Dendritic cell treated with granulocyte-macrophage colony-stimulating factor and Interleukin-4, amounts not matched to agents 40 ng/mL and 50 ng/mL, for 4 days (primary cell): ENCODE measurements at regions of chr10 and their contacts with region 1.

Region 1: DNA sequence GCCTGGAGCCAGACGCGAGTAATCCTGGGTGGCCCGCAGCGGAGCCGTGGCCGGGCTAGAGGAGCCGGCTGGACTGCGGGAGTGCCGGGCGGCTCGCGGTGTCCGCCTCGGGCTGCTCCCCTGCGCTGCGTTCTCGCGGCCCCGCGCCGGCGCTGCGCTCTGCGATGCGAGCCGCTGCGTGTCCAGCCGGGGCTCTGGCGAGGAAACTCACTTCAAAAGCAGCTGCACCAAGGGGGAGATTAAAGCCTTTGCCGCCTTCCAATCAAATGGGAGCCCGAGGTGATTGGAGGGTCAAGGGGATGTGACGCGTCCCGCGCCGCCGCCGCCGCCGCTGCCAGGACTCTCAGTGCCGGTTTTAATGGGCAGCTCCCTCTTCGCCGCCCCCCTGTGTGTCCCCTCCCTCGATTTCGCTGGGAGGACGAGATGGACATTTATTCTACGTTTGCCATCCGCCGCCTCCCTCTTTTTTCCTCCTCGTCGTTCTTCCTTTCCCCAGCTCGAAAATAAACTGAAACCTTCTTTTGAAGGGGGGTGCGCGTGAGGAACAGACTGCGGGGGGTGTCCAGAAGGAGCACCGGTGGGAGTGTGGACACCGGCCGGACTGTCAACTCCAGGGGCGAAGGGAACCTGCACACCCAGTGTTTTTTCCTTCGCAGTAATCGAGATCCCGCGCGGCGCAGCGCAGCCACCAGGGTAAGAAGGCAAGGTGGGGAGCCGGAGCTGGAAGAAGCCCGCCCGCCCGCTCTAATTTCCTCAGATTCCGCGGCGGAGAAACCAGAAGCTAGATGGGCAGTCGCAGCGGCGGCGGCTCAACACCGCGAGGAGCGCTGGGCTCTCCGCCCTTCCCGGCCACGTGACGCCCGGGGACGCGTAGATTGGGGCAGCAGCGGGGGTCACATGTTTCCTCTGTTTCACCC is at the start of gene ZNF503:
- H3K4me3 Mint-ChIP-seq: peak within 1 kb of the TSS; percentile 83
- H3K27ac Mint-ChIP-seq: peak within 1 kb of the TSS; percentile 91
- H3K4me1 Mint-ChIP-seq: peaks cover 52% of the 10 kb centered on the region
- H3K27me3 Mint-ChIP-seq: peaks cover 63% of the 10 kb centered on the region

Region 2: DNA sequence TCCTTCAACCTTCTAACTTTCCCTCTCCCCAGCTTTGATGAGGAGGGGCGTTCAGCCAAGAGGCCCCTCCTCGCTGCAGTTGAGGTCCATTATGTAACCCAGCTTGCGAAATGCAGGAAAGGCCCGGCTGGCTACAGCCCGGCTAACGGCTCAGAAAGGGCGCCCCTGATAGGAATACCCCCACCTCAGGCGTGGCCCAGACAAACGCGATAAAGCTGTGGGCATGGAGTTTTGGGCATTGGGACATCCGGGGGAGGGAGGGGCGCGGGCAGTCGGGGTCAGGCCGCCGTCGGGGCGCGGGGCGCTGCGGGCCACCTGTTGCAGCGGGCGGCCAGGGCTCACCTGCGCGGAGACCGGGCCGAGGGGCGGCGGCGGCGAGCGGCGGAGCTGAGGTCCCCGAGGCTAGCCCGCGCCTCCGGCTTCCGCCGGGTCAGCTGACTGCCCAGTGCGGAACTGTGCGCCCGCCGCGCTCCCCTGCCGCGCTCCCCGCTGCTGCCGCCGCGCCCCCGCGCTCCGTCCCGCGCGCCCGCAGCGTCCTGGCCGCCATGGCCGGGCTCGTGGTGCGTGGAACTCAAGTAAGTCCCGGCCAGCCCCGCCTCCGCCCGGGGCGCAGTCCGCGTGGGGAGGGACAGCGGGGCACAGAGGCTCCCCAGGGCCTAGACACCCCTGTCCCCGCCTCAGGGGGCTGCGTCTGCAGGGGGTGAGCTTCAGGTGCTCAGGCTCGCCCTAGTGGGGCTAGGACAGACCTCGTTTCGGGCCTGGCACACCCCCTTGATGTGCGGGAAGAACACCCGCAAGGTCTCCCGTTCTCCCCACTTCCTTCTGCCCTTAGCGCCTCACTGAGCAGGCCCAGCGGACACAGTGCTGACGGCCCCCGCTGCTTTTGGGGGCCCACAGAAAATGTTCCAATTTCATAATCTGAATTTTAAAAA is 29.6 kb after region 1 on chr10 and contains the start of gene LRMDA:
- intact Hi-C with region 1: loop called (anchors 2 kb)
- H3K4me3 Mint-ChIP-seq: peak within 1 kb of the TSS; percentile 88
- H3K27ac Mint-ChIP-seq: peak within 1 kb of the TSS; percentile 89
- H3K4me1 Mint-ChIP-seq: peaks cover 75% of the 10 kb centered on the region
- H3K27me3 Mint-ChIP-seq: no peaks in the 10 kb centered on the region

Region 3: GRCh38 chr10:75651417-75651816 is 249.6 kb after region 1 on chr10:
- intact Hi-C with region 1: loop called (anchors 2 kb)
- H3K4me3 Mint-ChIP-seq: no peak overlapping the region
- H3K27ac Mint-ChIP-seq: no peak overlapping the region
- H3K4me1 Mint-ChIP-seq: peaks cover 41% of the 10 kb centered on the region
- H3K27me3 Mint-ChIP-seq: no peaks in the 10 kb centered on the region

Region 4: GRCh38 chr10:76036111-76036940 is 634.5 kb after region 1 on chr10:
- intact Hi-C with region 1: loop called (anchors 1 kb)
- H3K4me3 Mint-ChIP-seq: no peak overlapping the region
- H3K27ac Mint-ChIP-seq: no peak overlapping the region
- H3K4me1 Mint-ChIP-seq: peaks cover 17% of the 10 kb centered on the region
- H3K27me3 Mint-ChIP-seq: no peaks in the 10 kb centered on the region

Region 5: DNA sequence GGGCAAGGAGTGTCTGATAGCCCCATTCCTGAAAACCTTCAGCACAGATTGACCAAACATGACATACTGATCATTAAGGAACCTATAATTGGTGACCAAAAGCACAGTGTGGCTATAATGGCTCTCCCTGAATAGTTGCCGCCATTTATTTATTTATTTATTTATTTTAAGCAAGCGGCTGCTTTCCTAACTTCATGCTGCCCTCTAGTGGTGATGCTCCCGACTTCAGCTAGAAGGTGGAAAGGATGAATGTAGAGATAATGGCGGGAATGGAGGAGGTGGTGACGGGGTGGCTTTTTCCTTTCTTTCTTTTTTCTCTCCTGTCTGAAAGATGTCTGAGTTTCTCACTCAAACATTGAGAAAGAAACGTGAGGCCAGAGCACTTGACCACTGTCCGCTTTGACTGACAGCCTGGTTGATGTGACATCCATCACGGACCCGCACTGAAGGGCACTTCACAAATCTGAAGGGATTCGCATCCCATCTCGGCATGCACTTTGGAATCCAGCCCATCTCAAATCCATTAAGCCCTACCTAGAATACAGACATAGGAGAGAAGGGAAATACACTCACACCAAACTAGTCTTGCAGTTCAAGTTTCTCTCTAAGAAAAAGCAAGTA is 1145.6 kb after region 1 on chr10:
- intact Hi-C with region 1: loop called (anchors 5 kb)
- H3K4me3 Mint-ChIP-seq: no peak overlapping the region
- H3K27ac Mint-ChIP-seq: no peak overlapping the region
- H3K4me1 Mint-ChIP-seq: peaks cover 1% of the 10 kb centered on the region
- H3K27me3 Mint-ChIP-seq: no peaks in the 10 kb centered on the region